WTC11 (cell line): ENCODE measurements at regions of chr14 and their contacts with region 1.

Region 1: GRCh38 chr14:60184146-60184904 is 19.1 kb upstream of the DHRS7 start:
- DNase-seq: no peak
- ATAC-seq: no peak
- H3K4me3 Mint-ChIP-seq: peak overlapping the region; percentile 44
- H3K27ac Mint-ChIP-seq: no peak overlapping the region
- H3K4me1 Mint-ChIP-seq: peaks cover 14% of the 10 kb centered on the region
- H3K27me3 Mint-ChIP-seq: no peaks in the 10 kb centered on the region
- CTCF ChIP-seq: peak; percentile 50

Region 2: DNA sequence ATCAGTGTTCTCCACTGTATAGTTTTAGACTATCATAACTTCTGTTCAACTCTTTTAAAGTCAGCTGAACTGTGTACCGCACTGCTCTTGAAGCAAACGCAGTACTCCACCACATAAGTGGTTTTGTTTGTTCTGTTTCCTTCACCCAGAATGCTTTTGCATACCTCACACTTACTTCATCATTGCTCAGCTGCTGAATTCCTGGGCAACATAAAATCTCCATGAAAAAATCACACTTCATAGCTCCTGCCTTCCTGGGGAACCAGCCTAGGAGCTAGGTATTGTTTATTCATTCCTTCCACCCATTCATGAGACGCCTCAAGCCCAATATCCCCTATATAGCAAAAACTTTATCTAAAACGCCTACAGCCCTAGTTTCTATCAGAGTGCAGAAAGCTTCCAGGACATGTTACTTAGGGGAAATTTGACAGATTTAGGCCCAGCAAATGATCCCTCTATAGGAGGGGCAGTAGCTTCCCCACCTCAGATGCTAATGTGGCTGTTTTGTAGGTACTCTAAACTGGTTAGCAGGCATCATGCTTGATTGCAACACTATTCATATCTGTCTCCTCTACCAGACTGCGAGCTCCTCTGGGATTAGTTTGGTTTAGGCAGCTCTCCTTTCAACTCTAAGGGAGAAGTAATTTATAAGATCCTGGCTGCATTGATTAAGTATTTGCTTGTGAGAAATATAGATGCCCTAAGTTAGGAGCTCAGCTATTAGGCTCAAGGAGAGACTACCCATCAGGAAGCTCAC is 219.9 kb before region 1 on chr14:
- CTCF ChIA-PET with region 1: interaction called, 28 read pairs
- POLR2A ChIA-PET with region 1: no interaction called
- DNase-seq: no peak
- ATAC-seq: peak; percentile 25; the same call in 1 of the 2 replicates
- H3K4me3 Mint-ChIP-seq: peak overlapping the region; percentile 75
- H3K27ac Mint-ChIP-seq: no peak overlapping the region
- H3K4me1 Mint-ChIP-seq: peaks cover 10% of the 10 kb centered on the region; the same call in 1 of the 2 replicates
- H3K27me3 Mint-ChIP-seq: no peaks in the 10 kb centered on the region
- CTCF ChIP-seq: no peak

Region 3: DNA sequence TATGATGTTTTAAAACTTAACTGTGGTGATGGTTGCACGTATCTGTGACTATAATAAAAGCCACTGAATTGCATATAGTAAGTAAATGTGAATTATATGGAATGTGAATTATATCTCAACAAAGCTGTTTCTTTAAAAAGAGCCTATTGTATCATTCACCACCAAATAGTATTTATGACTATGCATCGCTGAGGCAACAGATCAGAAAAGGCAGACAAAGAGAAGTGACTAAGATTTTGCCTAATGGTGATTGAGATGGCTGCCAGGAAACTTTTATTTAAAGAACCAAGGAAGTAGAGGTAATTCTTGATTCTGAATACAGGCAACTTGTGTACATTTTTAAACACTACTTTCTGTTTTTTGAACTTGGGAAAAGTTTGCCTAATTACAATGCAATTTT is 50.8 kb before region 1 on chr14:
- CTCF ChIA-PET with region 1: no interaction called
- POLR2A ChIA-PET with region 1: no interaction called
- DNase-seq: no peak
- ATAC-seq: no peak
- H3K4me3 Mint-ChIP-seq: no peak overlapping the region
- H3K27ac Mint-ChIP-seq: no peak overlapping the region
- H3K4me1 Mint-ChIP-seq: no peaks in the 10 kb centered on the region
- H3K27me3 Mint-ChIP-seq: no peaks in the 10 kb centered on the region
- CTCF ChIP-seq: no peak

Region 4: GRCh38 chr14:60164712-60165546 is 19.4 kb before region 1 on chr14 and contains the start of gene DHRS7:
- CTCF ChIA-PET with region 1: interaction called, 14 read pairs
- POLR2A ChIA-PET with region 1: no interaction called
- DNase-seq: peak; percentile 78
- ATAC-seq: peak; percentile 93
- H3K4me3 Mint-ChIP-seq: peak within 1 kb of the TSS; percentile 97
- H3K27ac Mint-ChIP-seq: peak within 1 kb of the TSS; percentile 97
- H3K4me1 Mint-ChIP-seq: peaks cover 37% of the 10 kb centered on the region
- H3K27me3 Mint-ChIP-seq: peaks cover 6% of the 10 kb centered on the region
- CTCF ChIP-seq: no peak
- total RNA-seq, gene DHRS7: 39.9 to 45.2 TPM (median 45.1 TPM) in 3 replicates

Region 5: DNA sequence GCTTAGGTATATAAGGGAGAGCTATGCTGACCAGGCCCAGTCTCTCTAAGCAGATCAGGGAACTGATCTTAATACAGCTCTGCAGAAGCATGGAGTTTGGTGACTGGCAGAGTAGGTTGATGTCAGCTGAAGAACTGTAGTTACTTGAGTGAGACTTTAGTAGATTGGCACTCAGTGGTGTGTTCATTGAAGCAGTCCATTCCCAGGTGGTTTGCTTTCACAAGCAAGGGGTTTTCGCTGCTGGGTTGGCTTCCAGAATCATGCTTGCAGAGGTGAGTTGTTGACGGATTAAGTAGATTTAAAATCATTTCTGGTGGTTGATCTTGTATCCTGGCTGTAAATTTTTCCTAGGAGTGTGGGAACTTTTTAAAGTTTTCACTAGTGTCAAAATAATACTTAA is 12.6 kb before region 1 on chr14:
- CTCF ChIA-PET with region 1: interaction called, 12 read pairs
- POLR2A ChIA-PET with region 1: no interaction called
- DNase-seq: no peak
- ATAC-seq: no peak
- H3K4me3 Mint-ChIP-seq: no peak overlapping the region
- H3K27ac Mint-ChIP-seq: no peak overlapping the region
- H3K4me1 Mint-ChIP-seq: peaks cover 5% of the 10 kb centered on the region; the same call in 1 of the 2 replicates
- H3K27me3 Mint-ChIP-seq: no peaks in the 10 kb centered on the region; the same call in 1 of the 2 replicates
- CTCF ChIP-seq: no peak